ENCODE measurements at regions of chr10 and their contacts with region 1.

Region 1: GRCh38 chr10:22988581-22989360 is 60.9 kb downstream of the ARMC3 start:
- DNase-seq: peak; percentile 44
- ATAC-seq: peak; percentile 75
- H3K4me3 ChIP-seq: no peak overlapping the region
- H3K27ac ChIP-seq: no peak overlapping the region
- H3K4me1 ChIP-seq: no peaks in the 10 kb centered on the region
- H3K27me3 ChIP-seq: no peaks in the 10 kb centered on the region
- CTCF ChIP-seq: peak; percentile 81 to 87 (median 86)
- EP300 ChIP-seq: no peak
- POLR2A ChIP-seq: no peak
- RAD21 ChIP-seq: peak; percentile 99

Region 2: DNA sequence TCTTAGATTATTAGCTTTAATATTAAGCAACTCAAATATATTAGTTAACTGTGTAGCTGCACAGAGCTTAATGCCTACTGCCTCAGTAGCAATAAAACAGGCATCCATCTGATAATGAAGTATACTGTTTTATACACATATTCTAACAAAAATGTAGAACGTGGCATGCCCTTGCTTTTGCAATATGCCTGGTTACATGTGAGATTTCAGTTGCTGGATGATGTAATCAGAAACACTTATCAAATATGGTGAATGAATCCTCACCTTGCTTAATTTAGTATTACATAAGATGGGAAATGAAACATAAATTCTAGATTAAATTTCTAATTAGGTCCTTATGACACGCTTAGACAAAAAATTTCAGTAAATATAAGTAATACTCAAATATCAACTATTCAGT is 993.2 kb before region 1 on chr10:
- CTCF ChIA-PET with region 1: interaction called, 72 read pairs
- POLR2A ChIA-PET with region 1: no interaction called
- RAD21 ChIA-PET with region 1: interaction called, 23 read pairs
- SMC1A ChIA-PET with region 1: interaction called, 50 read pairs
- in situ Hi-C with region 1: loop called (anchors 5 kb)
- intact Hi-C with region 1: loop called (anchors 2 kb)
- DNase-seq: no peak
- ATAC-seq: peak; percentile 33
- H3K4me3 ChIP-seq: no peak overlapping the region
- H3K27ac ChIP-seq: no peak overlapping the region
- H3K4me1 ChIP-seq: no peaks in the 10 kb centered on the region
- H3K27me3 ChIP-seq: no peaks in the 10 kb centered on the region
- CTCF ChIP-seq: no peak
- EP300 ChIP-seq: no peak
- POLR2A ChIP-seq: no peak
- RAD21 ChIP-seq: no peak

Region 3: DNA sequence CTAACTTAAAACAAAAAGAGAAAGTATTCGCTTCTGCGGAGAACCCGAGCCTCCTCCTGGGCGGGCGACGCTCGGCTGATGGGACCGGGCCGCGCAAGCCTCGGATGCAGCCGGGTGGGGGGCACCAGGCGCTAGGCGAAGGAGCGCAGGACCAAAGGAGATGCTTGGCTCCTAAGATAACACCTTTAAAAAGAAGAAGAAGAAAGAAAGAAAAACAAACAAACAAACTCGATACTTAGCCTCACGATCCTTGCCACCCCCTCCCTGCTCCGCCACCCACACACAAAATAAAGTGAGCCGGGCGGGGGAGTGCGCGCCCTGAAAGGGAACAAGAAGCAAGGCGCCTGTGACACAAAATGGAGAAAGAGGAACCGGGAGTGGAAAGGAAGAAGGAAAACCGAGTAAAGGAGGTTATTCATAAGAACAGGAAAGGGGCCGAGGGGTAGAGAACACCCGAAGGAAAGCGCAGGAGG is 737.0 kb before region 1 on chr10:
- CTCF ChIA-PET with region 1: interaction called, 3 read pairs
- POLR2A ChIA-PET with region 1: no interaction called
- RAD21 ChIA-PET with region 1: no interaction called
- SMC1A ChIA-PET with region 1: no interaction called
- in situ Hi-C with region 1: loop called (anchors 25 kb)
- intact Hi-C with region 1: loop called (anchors 5 kb)
- DNase-seq: no peak
- ATAC-seq: peak; percentile 66
- H3K4me3 ChIP-seq: peak overlapping the region; percentile 79
- H3K27ac ChIP-seq: peak overlapping the region; percentile 90
- H3K4me1 ChIP-seq: peaks cover 7% of the 10 kb centered on the region
- H3K27me3 ChIP-seq: peaks cover 0 to 2% of the 10 kb centered on the region in 2 experiments; a peak in 3 of 4 replicates
- CTCF ChIP-seq: no peak
- EP300 ChIP-seq: no peak
- POLR2A ChIP-seq: peak; percentile 62; the same call in 1 of the 2 replicates
- RAD21 ChIP-seq: no peak

Region 4: DNA sequence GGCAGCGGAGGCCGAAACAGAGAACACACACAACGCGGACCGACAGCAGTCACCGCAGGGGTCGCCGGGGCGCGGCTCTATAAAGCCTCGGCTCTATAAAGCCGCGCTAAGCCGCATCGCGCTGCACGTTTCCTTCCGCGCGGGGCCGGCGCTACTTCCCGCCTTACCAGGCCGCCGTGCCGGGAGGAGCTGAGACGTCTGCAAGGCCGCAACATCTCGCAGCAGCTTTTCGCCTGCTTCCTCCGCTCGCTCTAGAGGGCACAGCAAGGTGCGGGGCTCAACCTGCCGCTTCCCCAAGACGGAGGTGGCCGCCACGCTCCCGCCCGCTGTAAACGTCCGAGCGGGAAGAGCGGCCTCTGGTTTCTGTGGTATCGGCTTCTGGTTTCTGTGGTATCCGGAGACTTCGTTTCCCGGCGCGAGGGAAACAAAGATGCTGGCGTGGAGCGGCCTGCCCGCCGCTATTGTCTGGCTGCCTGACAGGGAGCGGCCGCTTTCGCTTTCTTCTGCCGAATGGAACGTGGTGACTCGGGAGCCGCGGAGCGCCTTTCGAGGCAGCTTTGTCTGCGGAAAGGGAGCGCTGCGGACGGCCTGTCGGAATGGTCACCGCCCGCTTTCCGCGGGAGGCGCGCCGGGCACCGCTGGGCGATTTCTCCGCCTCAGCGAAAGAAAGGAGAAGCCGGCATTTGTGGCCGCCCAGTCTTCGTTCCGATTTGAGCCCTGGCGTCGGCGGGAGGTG is 551.7 kb before region 1 on chr10:
- CTCF ChIA-PET with region 1: no interaction called
- POLR2A ChIA-PET with region 1: no interaction called
- RAD21 ChIA-PET with region 1: interaction called, 4 read pairs
- SMC1A ChIA-PET with region 1: no interaction called
- in situ Hi-C with region 1: no loop called
- intact Hi-C with region 1: loop called (anchors 5 kb)
- DNase-seq: peak; percentile 36
- ATAC-seq: peak; percentile 88
- H3K4me3 ChIP-seq: peak overlapping the region; percentile 71
- H3K27ac ChIP-seq: peak overlapping the region; percentile 45
- H3K4me1 ChIP-seq: peaks cover 10% of the 10 kb centered on the region
- H3K27me3 ChIP-seq: no peaks in the 10 kb centered on the region; a peak in 1 of 4 replicates
- CTCF ChIP-seq: 0 out of 6 replicates have a peak, but pooled peaks of 2 of the 3 experiments have one; percentile 1 to 6
- EP300 ChIP-seq: no peak
- POLR2A ChIP-seq: peak; percentile 98
- RAD21 ChIP-seq: peak; percentile 32; the same call in 1 of the 2 replicates

Region 5: GRCh38 chr10:22580711-22581110 is 408.1 kb before region 1 on chr10:
- CTCF ChIA-PET with region 1: interaction called, 48 read pairs
- POLR2A ChIA-PET with region 1: no interaction called
- RAD21 ChIA-PET with region 1: interaction called, 13 read pairs
- SMC1A ChIA-PET with region 1: interaction called, 28 read pairs
- in situ Hi-C with region 1: loop called (anchors 5 kb)
- intact Hi-C with region 1: loop called (anchors 2 kb)
- DNase-seq: no peak
- ATAC-seq: no peak
- H3K4me3 ChIP-seq: no peak overlapping the region
- H3K27ac ChIP-seq: no peak overlapping the region
- H3K4me1 ChIP-seq: peaks cover 3% of the 10 kb centered on the region
- H3K27me3 ChIP-seq: no peaks in the 10 kb centered on the region
- CTCF ChIP-seq: no peak
- EP300 ChIP-seq: no peak
- POLR2A ChIP-seq: no peak
- RAD21 ChIP-seq: no peak

Region 6: GRCh38 chr10:23067939-23068775 is 79.4 kb after region 1 on chr10:
- CTCF ChIA-PET with region 1: interaction called, 8 read pairs
- POLR2A ChIA-PET with region 1: no interaction called
- RAD21 ChIA-PET with region 1: no interaction called
- SMC1A ChIA-PET with region 1: interaction called, 8 read pairs
- in situ Hi-C with region 1: no loop called
- intact Hi-C with region 1: loop called (anchors 1 kb)
- DNase-seq: peak; percentile 27
- ATAC-seq: peak; percentile 84
- H3K4me3 ChIP-seq: no peak overlapping the region
- H3K27ac ChIP-seq: no peak overlapping the region
- H3K4me1 ChIP-seq: peaks cover 28% of the 10 kb centered on the region
- H3K27me3 ChIP-seq: no peaks in the 10 kb centered on the region
- CTCF ChIP-seq: peak; percentile 79 to 81 (median 80)
- EP300 ChIP-seq: no peak
- POLR2A ChIP-seq: no peak
- RAD21 ChIP-seq: peak; percentile 85

Region 7: DNA sequence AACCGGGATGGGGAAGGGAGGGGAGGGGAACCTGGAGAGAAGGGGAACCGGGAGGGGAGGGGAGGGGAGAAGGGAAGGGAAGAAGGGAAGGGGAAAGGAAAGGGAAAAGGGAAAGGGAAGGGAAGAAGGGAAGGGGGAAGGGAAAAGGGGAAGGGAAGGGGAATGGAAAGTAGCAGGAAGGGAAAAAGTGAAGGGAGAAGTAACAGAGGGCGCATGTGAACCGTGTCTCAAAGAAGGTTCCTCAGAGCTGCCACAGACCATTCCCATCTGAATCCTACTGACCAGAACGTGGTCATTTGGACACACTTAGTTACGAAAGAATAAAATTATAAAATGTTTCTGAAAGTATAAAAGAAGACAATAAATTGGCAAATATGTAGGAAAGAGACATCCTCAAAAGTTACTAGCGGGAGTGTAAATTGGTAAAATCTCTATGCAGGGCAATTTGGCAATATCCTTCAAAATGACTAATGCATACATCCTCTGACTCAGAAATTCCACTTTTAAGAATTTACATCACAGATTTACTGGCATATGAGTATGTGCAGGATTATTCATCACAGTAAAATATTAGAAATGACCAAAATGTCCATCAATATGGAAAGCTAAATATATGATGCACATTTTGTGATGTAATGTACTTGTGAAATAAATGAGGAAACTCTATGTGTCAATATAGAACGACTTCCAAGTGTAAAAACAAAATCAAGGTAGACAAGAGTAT is 343.0 kb after region 1 on chr10:
- CTCF ChIA-PET with region 1: no interaction called
- POLR2A ChIA-PET with region 1: no interaction called
- RAD21 ChIA-PET with region 1: no interaction called
- SMC1A ChIA-PET with region 1: no interaction called
- in situ Hi-C with region 1: no loop called
- intact Hi-C with region 1: no loop called
- DNase-seq: no peak
- ATAC-seq: no peak
- H3K4me3 ChIP-seq: no peak overlapping the region
- H3K27ac ChIP-seq: no peak overlapping the region
- H3K4me1 ChIP-seq: no peaks in the 10 kb centered on the region
- H3K27me3 ChIP-seq: no peaks in the 10 kb centered on the region
- CTCF ChIP-seq: no peak
- EP300 ChIP-seq: no peak
- POLR2A ChIP-seq: no peak
- RAD21 ChIP-seq: no peak

Measured in GM12878 (cell line).